Mammary epithelial cell (primary cell): ENCODE measurements at regions of chr17 and their contacts with region 1.

Region 1: DNA sequence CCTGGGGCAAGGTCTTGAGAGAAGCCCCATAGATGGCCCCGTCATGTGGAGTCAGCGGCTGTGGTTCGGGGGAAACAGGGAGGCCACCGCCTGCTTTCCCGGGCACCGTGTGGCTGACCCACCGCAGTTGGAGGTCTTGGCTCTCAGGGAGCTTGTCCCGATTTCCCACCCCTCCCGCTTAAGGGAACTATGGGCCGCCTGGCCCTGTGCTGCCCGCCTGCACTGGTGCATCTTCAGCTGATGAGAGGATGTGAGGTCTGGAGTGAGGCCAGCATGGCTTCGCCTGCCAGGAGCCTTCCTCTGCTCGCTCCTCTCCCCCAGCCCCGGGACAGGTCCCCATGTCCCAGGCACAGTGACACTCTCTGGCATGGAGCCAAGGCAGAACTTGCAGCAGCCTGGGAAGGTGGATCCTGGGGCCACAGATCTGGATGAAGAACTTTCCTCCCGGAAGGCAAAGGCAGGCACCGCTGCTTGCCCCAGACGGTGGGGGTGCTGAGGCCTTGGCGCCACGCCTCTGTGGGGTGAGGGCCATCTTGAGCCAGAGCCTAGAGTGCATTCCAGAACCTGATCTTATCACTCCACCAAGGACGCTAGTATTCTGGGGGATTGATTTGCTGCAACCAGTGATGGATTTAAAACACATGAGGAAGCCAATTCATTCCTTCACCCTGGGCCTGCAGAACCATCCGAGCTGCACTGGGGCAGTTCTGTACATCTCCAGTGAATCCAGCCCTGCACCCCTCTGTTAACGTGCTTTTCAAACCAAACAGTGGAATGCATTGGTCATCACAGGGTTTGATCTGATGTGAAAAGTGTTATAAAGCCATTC is 178.6 kb upstream of the TNRC6C start:
- DNase-seq: no peak
- H3K4me3 ChIP-seq: no peak overlapping the region
- H3K27ac ChIP-seq: no peak overlapping the region
- H3K4me1 ChIP-seq: peaks cover 7% of the 10 kb centered on the region
- H3K27me3 ChIP-seq: peaks cover 5% of the 10 kb centered on the region
- CTCF ChIP-seq: no peak

Region 2: DNA sequence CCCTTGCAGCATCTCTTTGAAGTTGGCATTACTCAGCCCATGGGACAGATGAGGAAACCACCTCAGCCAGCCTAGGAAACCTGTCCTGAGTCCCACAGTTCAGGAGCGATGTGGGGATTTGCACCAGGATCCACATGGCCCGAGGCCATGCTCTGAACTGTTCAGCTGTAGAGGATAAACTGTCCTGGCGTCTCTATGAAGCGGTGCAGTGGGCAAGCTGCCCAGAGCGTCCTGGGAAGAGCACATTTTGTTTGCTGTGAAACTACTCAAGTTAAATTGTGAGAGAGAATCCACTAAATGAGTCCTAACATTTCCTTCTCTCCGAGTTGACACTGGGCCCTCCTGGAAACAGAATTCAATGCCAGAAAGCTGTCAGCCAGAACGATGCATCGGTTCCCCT is 98.1 kb before region 1 on chr17:
- CTCF ChIA-PET with region 1: no interaction called
- dilution Hi-C with region 1: no loop called
- in situ Hi-C with region 1: no loop called
- intact Hi-C with region 1: loop called (anchors 10 kb)
- DNase-seq: no peak
- H3K4me3 ChIP-seq: no peak overlapping the region
- H3K27ac ChIP-seq: no peak overlapping the region
- H3K4me1 ChIP-seq: no peaks in the 10 kb centered on the region
- H3K27me3 ChIP-seq: peaks cover 2% of the 10 kb centered on the region
- CTCF ChIP-seq: no peak